ENCODE measurements at regions of chr4 and their contacts with region 1.

Region 1: DNA sequence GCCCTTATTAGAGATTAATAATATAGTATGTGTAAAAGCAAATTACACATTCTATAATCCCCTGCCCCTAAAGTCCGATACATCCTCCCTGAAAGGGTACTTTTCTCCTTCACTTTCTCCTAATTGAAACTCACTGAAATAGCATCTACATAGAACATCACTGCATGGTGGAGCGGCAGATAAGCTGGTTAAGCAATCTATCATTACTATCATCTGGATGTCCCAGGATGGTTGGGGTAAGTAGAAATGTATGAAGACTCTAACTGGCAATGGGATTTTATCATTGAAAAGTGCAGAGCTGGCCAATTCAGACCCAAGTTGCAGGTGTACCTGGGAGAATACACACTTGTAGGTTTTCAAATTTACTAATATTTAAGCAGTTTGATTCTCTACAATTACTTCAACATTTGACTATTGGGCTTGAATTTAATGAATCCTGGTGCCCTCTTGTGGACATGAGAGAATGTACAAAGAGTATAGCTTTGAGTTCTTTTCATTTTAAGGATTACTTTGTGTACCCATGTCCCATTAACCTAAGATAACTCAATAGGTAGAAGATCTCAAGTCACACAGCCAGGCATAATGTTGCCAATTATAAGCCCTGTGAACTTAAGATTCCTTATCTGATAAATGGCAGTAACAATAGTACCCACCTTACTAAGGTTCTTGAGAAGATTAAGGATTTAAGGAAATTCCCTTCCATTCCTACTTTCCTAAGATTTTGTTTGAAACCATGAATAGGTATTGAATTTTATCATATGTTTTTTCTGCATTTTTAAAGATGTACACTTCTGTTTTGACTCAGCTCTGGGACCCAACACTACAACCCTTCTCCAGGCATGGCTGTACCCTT is 69.8 kb downstream of the SHROOM3 start:
- DNase-seq: peak in 1 of 4 donors; percentile 42
- ATAC-seq: peak; percentile 81
- H3K4me3 ChIP-seq: no peak overlapping the region
- H3K27ac ChIP-seq: no peak overlapping the region
- H3K4me1 ChIP-seq: no peaks in the 10 kb centered on the region
- H3K27me3 ChIP-seq: no peaks in the 10 kb centered on the region
- CTCF ChIP-seq: peak; percentile 55 to 83 (median 67)
- POLR2A ChIP-seq: no peak

Region 2: GRCh38 chr4:76430519-76431388 is 74.1 kb before region 1 on chr4:
- intact Hi-C with region 1: loop called (anchors 5 kb)
- DNase-seq: peak in 1 of 4 donors; percentile 48
- ATAC-seq: peak; percentile 52
- H3K4me3 ChIP-seq: no peak overlapping the region
- H3K27ac ChIP-seq: no peak overlapping the region
- H3K4me1 ChIP-seq: peaks cover 17% of the 10 kb centered on the region
- H3K27me3 ChIP-seq: no peaks in the 10 kb centered on the region
- CTCF ChIP-seq: peak; percentile 38 to 89 (median 79)
- POLR2A ChIP-seq: no peak

Region 3: GRCh38 chr4:76601791-76602190 is 97.0 kb after region 1 on chr4:
- intact Hi-C with region 1: no loop called
- DNase-seq: peak in 1 of 4 donors; percentile 20
- ATAC-seq: peak; percentile 55
- H3K4me3 ChIP-seq: no peak overlapping the region
- H3K27ac ChIP-seq: peak overlapping the region in 3 of 4 donors; percentile 56 to 76 (median 76)
- H3K4me1 ChIP-seq: peaks cover 58% of the 10 kb centered on the region
- H3K27me3 ChIP-seq: no peaks in the 10 kb centered on the region
- CTCF ChIP-seq: no peak
- POLR2A ChIP-seq: no peak

Region 4: GRCh38 chr4:76738086-76738931 is 233.5 kb after region 1 on chr4:
- intact Hi-C with region 1: loop called (anchors 10 kb)
- DNase-seq: peak in 1 of 4 donors; percentile 23
- ATAC-seq: peak; percentile 47
- H3K4me3 ChIP-seq: no peak overlapping the region
- H3K27ac ChIP-seq: peak overlapping the region in 2 of 4 donors; percentile 0 to 2
- H3K4me1 ChIP-seq: peaks cover 8% of the 10 kb centered on the region
- H3K27me3 ChIP-seq: no peaks in the 10 kb centered on the region
- CTCF ChIP-seq: no peak
- POLR2A ChIP-seq: no peak